GM12878 (cell line): ENCODE measurements at regions of chr20 and their contacts with region 1.

Region 1: DNA sequence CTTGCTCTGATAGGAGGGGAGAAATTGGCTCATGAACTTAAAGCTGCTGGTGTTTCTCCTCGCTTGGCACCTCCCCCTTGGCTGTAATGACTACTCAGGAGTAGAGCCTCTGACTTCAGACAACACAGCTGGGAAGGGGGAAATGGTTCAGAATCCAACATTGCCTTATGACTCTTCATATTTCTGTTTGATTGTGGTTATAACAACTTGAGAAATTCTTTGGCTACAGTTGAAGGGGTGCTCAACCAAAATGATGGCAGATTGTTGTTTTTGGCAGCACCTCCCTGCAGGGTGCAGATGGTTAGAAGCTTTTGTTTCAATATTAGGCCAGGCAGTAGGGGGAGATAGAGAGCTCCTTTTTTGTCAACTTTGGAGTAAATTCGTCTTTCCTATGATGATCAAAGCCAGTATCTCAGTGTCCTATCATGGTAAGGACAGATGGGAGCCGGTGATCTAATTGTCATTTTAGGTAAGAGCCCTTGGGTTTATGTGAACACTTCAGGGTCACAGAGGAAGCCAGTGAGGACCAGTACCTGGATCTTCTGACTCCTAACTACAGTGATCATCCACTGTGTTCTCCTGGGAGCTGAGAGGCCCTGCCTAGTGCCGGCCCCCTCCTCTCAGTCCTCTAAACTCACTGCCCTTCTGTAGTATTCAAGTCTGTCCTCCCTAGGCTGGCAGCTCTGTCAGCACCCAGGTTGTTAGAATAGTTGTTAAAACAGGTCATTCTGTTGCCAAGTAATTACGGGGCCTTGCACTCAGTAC is 39.9 kb downstream of the RPRD1B start:
- DNase-seq: no peak
- ATAC-seq: peak; percentile 92
- H3K4me3 ChIP-seq: no peak overlapping the region
- H3K27ac ChIP-seq: no peak overlapping the region
- H3K4me1 ChIP-seq: peaks cover 13% of the 10 kb centered on the region
- H3K27me3 ChIP-seq: no peaks in the 10 kb centered on the region
- CTCF ChIP-seq: peak; percentile 62 to 75 (median 71)
- EP300 ChIP-seq: no peak
- POLR2A ChIP-seq: no peak
- RAD21 ChIP-seq: peak; percentile 77

Region 2: GRCh38 chr20:38083338-38084048 is 10.0 kb after region 1 on chr20:
- CTCF ChIA-PET with region 1: interaction called, 189 read pairs
- POLR2A ChIA-PET with region 1: interaction called, 3 read pairs
- RAD21 ChIA-PET with region 1: interaction called, 79 read pairs
- SMC1A ChIA-PET with region 1: interaction called, 166 read pairs
- in situ Hi-C with region 1: no loop called
- intact Hi-C with region 1: no loop called
- DNase-seq: no peak
- ATAC-seq: no peak
- H3K4me3 ChIP-seq: no peak overlapping the region
- H3K27ac ChIP-seq: no peak overlapping the region
- H3K4me1 ChIP-seq: no peaks in the 10 kb centered on the region
- H3K27me3 ChIP-seq: no peaks in the 10 kb centered on the region
- CTCF ChIP-seq: no peak
- EP300 ChIP-seq: no peak
- POLR2A ChIP-seq: no peak
- RAD21 ChIP-seq: no peak

Region 3: DNA sequence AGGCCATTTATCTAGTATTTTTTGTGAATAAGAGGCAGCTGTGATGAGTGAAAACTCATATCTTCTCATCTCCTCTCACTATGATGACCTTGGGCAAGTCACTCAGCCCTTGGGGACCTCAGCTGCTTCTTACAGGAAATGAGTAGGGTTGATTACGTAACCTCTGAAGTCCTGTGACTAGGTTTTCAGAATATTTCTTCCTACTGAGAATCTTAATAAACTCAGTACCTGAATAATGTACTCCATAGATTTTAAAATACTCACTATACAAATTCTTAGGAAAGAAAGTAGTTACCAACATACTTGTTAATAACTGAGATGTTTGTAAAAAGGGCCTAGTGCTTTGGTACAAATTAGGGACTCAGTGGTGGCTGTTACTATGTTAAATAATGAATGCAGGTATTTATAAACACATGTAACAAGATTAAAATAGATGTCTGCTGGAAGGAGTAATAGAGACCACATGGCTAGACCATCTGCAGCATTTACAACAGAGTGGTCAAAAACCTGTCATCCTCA is 20.9 kb after region 1 on chr20:
- CTCF ChIA-PET with region 1: interaction called, 189 read pairs
- POLR2A ChIA-PET with region 1: interaction called, 12 read pairs
- RAD21 ChIA-PET with region 1: interaction called, 79 read pairs
- SMC1A ChIA-PET with region 1: interaction called, 166 read pairs
- in situ Hi-C with region 1: no loop called
- intact Hi-C with region 1: no loop called
- DNase-seq: peak; percentile 73
- ATAC-seq: peak; percentile 81
- H3K4me3 ChIP-seq: no peak overlapping the region
- H3K27ac ChIP-seq: peak overlapping the region; percentile 98
- H3K4me1 ChIP-seq: peaks cover 47% of the 10 kb centered on the region
- H3K27me3 ChIP-seq: no peaks in the 10 kb centered on the region
- CTCF ChIP-seq: no peak
- EP300 ChIP-seq: peak; percentile 88 to 93
- POLR2A ChIP-seq: no peak
- RAD21 ChIP-seq: no peak

Region 4: DNA sequence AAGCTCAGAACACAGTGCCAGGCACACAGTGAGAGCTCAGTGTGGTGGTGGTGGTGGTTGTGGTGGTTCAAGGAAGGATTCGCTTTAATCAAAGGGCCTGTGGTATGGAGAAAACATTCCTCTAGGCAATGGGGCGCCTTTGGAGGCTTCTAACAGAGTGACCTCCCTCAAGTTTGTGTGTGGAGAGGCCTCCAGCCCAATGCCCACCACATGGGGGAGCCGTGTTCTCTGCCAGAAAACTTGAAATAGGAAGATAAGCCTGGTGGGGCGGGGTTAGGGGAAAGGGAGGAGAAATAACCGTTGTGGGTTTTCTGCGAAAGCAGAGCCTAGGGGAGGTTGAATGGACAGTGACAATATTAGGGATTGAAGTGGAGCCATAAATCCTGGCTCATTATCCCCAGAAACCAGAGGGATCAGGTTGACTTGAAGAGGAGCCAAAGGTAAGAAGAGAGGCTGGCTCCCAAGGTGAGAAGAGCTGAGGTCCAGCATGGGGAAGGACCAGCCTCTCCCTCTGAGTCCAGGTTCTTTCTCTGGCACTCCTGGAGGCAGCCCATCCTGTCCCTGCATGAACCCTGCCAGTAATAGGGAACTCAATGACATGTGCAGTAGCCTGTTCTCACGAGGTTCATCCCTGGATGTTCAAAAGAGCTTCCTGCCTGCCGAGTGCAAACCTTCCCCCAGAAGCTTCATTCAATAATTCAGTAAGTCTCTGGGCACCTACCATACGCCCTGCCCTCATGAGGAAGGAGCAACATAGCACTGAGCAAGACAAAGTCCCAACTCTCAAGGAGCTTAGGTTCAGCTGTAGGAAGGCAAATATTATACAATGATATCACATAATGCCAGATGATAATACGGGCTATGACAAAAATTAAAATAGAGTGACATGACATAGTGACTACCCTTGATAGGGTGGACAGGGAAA is 40.2 kb after region 1 on chr20:
- CTCF ChIA-PET with region 1: interaction called, 131 read pairs
- POLR2A ChIA-PET with region 1: interaction called, 7 read pairs
- RAD21 ChIA-PET with region 1: interaction called, 88 read pairs
- SMC1A ChIA-PET with region 1: interaction called, 105 read pairs
- in situ Hi-C with region 1: no loop called
- intact Hi-C with region 1: no loop called
- DNase-seq: no peak
- ATAC-seq: peak; percentile 78
- H3K4me3 ChIP-seq: no peak overlapping the region
- H3K27ac ChIP-seq: no peak overlapping the region
- H3K4me1 ChIP-seq: 0 out of 2 replicates have a peak, but pooled peaks cover 3% of the 10 kb centered on the region
- H3K27me3 ChIP-seq: no peaks in the 10 kb centered on the region
- CTCF ChIP-seq: peak; percentile 18 to 32 (median 25); a peak in 4 of 6 replicates
- EP300 ChIP-seq: no peak
- POLR2A ChIP-seq: no peak
- RAD21 ChIP-seq: peak; percentile 54

Region 5: GRCh38 chr20:38143646-38144554 is 70.4 kb after region 1 on chr20:
- CTCF ChIA-PET with region 1: interaction called, 20 read pairs
- POLR2A ChIA-PET with region 1: no interaction called
- RAD21 ChIA-PET with region 1: interaction called, 3 read pairs
- SMC1A ChIA-PET with region 1: interaction called, 3 read pairs
- in situ Hi-C with region 1: no loop called
- intact Hi-C with region 1: no loop called
- DNase-seq: no peak
- ATAC-seq: peak; percentile 42; the same call in 2 of the 3 replicates
- H3K4me3 ChIP-seq: no peak overlapping the region
- H3K27ac ChIP-seq: no peak overlapping the region
- H3K4me1 ChIP-seq: peaks cover 4% of the 10 kb centered on the region; the same call in 1 of the 2 replicates
- H3K27me3 ChIP-seq: no peaks in the 10 kb centered on the region
- CTCF ChIP-seq: no peak
- EP300 ChIP-seq: no peak
- POLR2A ChIP-seq: no peak
- RAD21 ChIP-seq: no peak

Region 6: DNA sequence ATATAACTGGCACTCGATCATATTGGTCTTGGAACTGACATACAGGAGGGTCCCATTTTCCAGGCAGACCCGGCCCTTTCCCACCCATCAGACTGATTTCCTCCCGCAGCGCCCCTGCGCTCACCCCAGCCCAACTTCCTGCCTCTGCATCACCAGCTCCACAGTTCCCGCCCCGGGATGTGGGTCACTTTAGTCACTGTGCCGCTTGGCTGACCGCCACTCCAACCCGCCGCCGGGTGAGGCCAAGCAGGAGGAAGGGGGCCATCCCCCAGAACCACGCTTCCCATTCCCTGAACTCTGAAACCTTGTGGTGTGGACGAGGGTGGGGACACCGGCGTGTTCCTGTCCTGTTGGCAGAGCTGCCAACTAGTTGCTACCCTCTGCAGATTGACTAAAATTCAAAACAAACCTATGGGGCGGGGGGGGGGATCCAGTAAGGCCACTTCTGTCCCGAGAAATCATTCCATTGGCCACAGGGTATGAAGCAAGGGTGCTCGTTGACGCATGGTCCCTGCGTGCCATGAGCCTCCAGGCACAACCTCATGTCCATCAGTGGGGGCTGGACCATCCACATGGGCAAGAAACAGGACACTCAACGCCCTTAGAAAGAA is 79.2 kb after region 1 on chr20:
- CTCF ChIA-PET with region 1: interaction called, 26 read pairs
- POLR2A ChIA-PET with region 1: interaction called, 3 read pairs
- RAD21 ChIA-PET with region 1: interaction called, 14 read pairs
- SMC1A ChIA-PET with region 1: interaction called, 9 read pairs
- in situ Hi-C with region 1: loop called (anchors 25 kb)
- intact Hi-C with region 1: no loop called
- DNase-seq: no peak
- ATAC-seq: peak; percentile 68
- H3K4me3 ChIP-seq: peak overlapping the region; percentile 17; the same call in 1 of the 2 replicates
- H3K27ac ChIP-seq: peak overlapping the region; percentile 54
- H3K4me1 ChIP-seq: peaks cover 24% of the 10 kb centered on the region
- H3K27me3 ChIP-seq: no peaks in the 10 kb centered on the region
- CTCF ChIP-seq: no peak
- EP300 ChIP-seq: no peak
- POLR2A ChIP-seq: no peak
- RAD21 ChIP-seq: no peak

Region 7: DNA sequence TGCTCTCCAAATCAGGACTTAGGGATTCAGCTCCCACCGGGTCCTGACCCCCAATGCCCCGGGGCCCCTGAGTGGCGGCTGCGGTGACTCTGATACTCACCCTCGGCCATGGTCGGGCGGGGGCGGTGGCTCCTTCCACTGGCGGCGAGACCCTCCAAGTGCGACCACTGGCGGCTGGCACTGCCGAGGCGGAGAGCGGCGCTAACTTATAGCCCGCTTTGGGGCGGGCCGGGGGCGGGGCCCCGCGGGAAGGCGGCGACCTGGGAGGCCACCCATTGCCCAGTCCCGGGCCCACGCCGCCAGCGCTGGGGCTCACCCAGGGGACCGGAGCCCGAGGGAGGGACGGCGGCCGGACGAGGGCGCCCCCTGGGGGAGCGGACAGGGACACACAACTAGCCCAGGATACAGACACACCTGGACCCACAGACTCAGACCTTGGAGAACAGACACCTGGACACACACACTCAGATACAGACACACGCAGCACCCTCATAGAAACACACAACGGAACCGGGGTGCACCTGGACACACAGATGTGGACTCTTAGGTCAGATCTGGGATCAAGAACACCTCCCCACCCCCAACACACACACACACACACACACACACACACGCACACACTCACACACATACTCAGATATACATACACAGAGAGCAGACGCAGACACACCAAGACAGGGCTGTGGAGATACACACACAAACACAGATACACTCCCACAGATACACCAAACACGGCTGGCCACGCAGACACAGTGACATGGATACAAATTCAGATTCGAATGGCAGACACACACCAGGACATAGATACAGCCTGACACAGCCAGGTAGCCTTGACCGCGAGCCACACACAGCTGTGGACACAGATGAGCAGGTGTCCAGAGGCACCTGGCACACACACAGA is 91.8 kb after region 1 on chr20 and contains the start of gene TGM2:
- CTCF ChIA-PET with region 1: interaction called, 103 read pairs
- POLR2A ChIA-PET with region 1: interaction called, 4 read pairs
- RAD21 ChIA-PET with region 1: interaction called, 59 read pairs
- SMC1A ChIA-PET with region 1: interaction called, 117 read pairs
- in situ Hi-C with region 1: loop called (anchors 25 kb)
- intact Hi-C with region 1: loop called (anchors 1 kb)
- DNase-seq: peak; percentile 32
- ATAC-seq: peak; percentile 97
- H3K4me3 ChIP-seq: peak within 1 kb of the TSS; percentile 25; the same call in 1 of the 2 replicates
- H3K27ac ChIP-seq: no peak within 1 kb of the TSS
- H3K4me1 ChIP-seq: peaks cover 17% of the 10 kb centered on the region
- H3K27me3 ChIP-seq: no peaks in the 10 kb centered on the region
- CTCF ChIP-seq: peak; percentile 80 to 88 (median 85)
- EP300 ChIP-seq: no peak
- POLR2A ChIP-seq: no peak
- RAD21 ChIP-seq: peak; percentile 87
- polyA plus RNA-seq, gene TGM2: 0.11 to 0.16 TPM